Activated CD4-positive, alpha-beta T cell treated with anti-CD3 and anti-CD28 coated beads, Interleukin-2, amount 10 ng/mL, durations not matched to agents 24 days and 14 days (primary cell): ENCODE measurements at regions of chr1 and their contacts with region 1.

Region 1: DNA sequence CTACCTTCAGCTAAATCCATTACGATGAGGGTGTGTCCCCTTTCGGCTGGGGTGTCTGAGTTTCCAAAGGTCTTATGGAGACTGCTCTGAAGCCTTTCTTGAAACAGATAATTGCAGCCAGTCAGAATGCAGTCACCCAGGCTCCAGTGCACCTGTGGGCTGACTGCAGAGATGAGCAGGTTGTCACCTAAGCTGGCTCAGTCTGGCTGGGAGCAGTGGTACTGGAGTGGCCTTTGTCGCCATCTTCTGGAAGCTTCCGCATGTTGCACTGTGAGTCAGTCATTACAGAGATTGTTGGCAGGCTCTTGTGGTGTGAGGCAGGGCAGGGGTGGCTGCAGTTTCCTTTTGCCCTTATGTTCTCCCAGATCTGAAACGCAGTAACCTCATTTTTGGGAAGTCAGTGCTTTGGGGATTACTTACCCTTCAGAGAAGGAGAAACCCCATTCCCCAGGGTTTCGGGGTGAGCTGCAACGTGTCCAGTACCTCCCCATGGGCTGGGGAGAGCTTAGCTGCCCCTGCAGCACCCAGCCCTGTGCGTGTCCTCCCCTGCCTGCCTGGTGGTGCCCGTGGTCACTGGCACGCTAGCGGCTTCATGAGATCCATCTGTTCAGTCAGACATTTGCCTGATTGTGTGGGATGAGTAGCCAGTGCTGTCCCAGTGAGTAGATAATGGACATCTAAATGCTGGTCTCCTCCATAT is 48.0 kb downstream of the SMYD2 start:
- DNase-seq: peak; percentile 94
- H3K4me3 Mint-ChIP-seq: no peak overlapping the region
- H3K27ac Mint-ChIP-seq: no peak overlapping the region
- H3K4me1 Mint-ChIP-seq: peaks cover 7% of the 10 kb centered on the region
- H3K27me3 Mint-ChIP-seq: no peaks in the 10 kb centered on the region

Region 2: GRCh38 chr1:213596729-213597128 is 732.2 kb before region 1 on chr1:
- intact Hi-C with region 1: no loop called
- DNase-seq: no peak
- H3K4me3 Mint-ChIP-seq: no peak overlapping the region
- H3K27ac Mint-ChIP-seq: no peak overlapping the region
- H3K4me1 Mint-ChIP-seq: no peaks in the 10 kb centered on the region
- H3K27me3 Mint-ChIP-seq: no peaks in the 10 kb centered on the region

Region 3: DNA sequence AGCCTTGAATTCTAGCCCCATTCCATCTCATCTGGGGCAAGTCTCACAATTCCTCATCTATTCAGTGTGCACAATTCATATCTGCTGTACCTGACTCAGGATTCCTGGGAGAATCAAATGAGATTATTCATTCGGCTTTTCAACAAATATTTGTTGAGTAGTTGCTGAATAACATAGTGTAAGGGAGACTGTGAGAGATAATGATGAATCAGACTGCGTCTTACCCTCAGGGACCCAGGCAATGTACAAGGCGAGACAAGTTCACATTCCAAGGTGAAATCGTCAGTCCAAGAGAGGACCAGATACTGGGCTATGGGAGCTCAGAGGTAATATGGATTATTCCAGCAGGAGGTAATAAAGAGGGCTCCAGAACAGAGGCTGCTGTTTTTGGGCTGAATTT is 115.8 kb before region 1 on chr1:
- intact Hi-C with region 1: loop called (anchors 1 kb)
- DNase-seq: no peak
- H3K4me3 Mint-ChIP-seq: no peak overlapping the region
- H3K27ac Mint-ChIP-seq: no peak overlapping the region
- H3K4me1 Mint-ChIP-seq: no peaks in the 10 kb centered on the region
- H3K27me3 Mint-ChIP-seq: peaks cover 32% of the 10 kb centered on the region

Region 4: GRCh38 chr1:214281021-214281719 is 47.8 kb before region 1 on chr1 and contains the start of gene SMYD2:
- intact Hi-C with region 1: loop called (anchors 5 kb)
- DNase-seq: peak; percentile 90
- H3K4me3 Mint-ChIP-seq: peak within 1 kb of the TSS; percentile 93
- H3K27ac Mint-ChIP-seq: peak within 1 kb of the TSS; percentile 90
- H3K4me1 Mint-ChIP-seq: peaks cover 37% of the 10 kb centered on the region
- H3K27me3 Mint-ChIP-seq: no peaks in the 10 kb centered on the region
- total RNA-seq, gene SMYD2: 33.3 and 34.1 TPM in 2 replicates

Region 5: GRCh38 chr1:214296860-214297745 is 31.8 kb before region 1 on chr1:
- intact Hi-C with region 1: no loop called
- DNase-seq: no peak
- H3K4me3 Mint-ChIP-seq: no peak overlapping the region
- H3K27ac Mint-ChIP-seq: no peak overlapping the region
- H3K4me1 Mint-ChIP-seq: peaks cover 2% of the 10 kb centered on the region
- H3K27me3 Mint-ChIP-seq: no peaks in the 10 kb centered on the region

Region 6: GRCh38 chr1:214310010-214310409 is 18.9 kb before region 1 on chr1:
- intact Hi-C with region 1: no loop called
- DNase-seq: no peak
- H3K4me3 Mint-ChIP-seq: peak overlapping the region; percentile 42
- H3K27ac Mint-ChIP-seq: no peak overlapping the region
- H3K4me1 Mint-ChIP-seq: peaks cover 16% of the 10 kb centered on the region
- H3K27me3 Mint-ChIP-seq: no peaks in the 10 kb centered on the region

Region 7: DNA sequence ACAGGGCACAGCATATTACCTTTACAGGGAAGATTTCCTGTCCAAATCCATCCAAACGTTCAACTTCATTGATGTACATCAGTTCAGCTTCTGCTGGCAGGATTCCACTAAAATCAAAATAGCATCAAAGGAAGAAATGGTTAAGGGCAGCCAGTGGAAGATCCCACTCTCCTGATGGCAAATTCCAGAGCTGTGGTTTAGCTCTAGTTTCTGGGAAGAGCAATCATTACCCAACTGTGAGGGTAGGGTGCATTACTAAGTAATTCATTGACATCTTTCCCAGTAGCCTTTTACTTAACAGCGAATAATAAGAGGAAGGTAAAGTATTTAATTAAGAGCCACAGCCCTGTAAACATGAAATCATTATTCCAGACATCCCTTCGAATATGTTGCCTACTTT is 72.7 kb after region 1 on chr1:
- intact Hi-C with region 1: no loop called
- DNase-seq: no peak
- H3K4me3 Mint-ChIP-seq: no peak overlapping the region
- H3K27ac Mint-ChIP-seq: no peak overlapping the region
- H3K4me1 Mint-ChIP-seq: peaks cover 57% of the 10 kb centered on the region
- H3K27me3 Mint-ChIP-seq: no peaks in the 10 kb centered on the region

Region 8: GRCh38 chr1:214439352-214440119 is 110.6 kb after region 1 on chr1:
- intact Hi-C with region 1: loop called (anchors 2 kb)
- DNase-seq: peak; percentile 86
- H3K4me3 Mint-ChIP-seq: peak overlapping the region; percentile 74
- H3K27ac Mint-ChIP-seq: peak overlapping the region; percentile 98
- H3K4me1 Mint-ChIP-seq: peaks cover 55% of the 10 kb centered on the region
- H3K27me3 Mint-ChIP-seq: no peaks in the 10 kb centered on the region

Region 9: DNA sequence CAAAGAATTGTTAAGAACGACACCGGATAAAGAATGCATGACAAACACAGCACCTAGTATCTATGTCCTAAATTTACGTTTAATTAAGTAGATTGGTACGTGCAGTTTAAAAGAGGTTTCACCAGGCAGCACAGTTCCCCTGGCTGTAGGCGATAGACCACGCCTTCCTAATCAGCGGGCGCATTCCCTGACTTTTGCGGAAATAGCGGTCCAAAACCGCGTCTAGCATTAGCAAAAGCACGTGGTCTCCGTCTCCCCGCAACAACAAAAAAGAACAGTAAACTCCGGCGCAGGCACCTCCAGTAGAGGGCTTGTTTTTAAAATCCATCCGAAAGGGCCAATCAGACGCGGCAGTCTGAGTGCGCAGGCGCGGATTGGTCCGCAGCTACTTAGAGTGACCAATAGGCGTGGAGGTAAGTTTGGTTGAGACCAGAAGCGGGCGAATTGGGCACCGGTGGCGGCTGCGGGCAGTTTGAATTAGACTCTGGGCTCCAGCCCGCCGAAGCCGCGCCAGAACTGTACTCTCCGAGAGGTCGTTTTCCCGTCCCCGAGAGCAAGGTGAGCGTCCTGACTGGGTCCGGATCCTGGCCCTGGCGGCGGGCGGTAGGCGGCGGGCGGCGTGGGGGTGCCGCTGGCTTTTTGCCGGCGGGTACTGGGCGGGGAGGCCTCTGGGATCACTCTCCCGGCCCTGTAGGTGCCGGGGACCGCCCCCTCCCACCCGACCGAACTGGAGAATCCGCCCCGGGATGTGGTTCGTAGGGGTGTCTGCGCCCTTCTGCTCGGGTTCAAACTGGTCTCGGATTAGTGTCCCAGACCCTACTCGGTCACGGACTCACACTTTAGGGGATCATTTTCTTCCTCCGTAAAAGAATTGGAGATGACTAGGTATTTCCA is 274.1 kb after region 1 on chr1 and contains the start of gene CENPF:
- intact Hi-C with region 1: loop called (anchors 5 kb)
- DNase-seq: peak; percentile 98
- H3K4me3 Mint-ChIP-seq: peak within 1 kb of the TSS; percentile 90
- H3K27ac Mint-ChIP-seq: peak within 1 kb of the TSS; percentile 97
- H3K4me1 Mint-ChIP-seq: peaks cover 29% of the 10 kb centered on the region
- H3K27me3 Mint-ChIP-seq: no peaks in the 10 kb centered on the region
- total RNA-seq, gene CENPF: 54.4 and 63.0 TPM in 2 replicates